ENCODE measurements at regions of chr20 and their contacts with region 1.

Region 1: DNA sequence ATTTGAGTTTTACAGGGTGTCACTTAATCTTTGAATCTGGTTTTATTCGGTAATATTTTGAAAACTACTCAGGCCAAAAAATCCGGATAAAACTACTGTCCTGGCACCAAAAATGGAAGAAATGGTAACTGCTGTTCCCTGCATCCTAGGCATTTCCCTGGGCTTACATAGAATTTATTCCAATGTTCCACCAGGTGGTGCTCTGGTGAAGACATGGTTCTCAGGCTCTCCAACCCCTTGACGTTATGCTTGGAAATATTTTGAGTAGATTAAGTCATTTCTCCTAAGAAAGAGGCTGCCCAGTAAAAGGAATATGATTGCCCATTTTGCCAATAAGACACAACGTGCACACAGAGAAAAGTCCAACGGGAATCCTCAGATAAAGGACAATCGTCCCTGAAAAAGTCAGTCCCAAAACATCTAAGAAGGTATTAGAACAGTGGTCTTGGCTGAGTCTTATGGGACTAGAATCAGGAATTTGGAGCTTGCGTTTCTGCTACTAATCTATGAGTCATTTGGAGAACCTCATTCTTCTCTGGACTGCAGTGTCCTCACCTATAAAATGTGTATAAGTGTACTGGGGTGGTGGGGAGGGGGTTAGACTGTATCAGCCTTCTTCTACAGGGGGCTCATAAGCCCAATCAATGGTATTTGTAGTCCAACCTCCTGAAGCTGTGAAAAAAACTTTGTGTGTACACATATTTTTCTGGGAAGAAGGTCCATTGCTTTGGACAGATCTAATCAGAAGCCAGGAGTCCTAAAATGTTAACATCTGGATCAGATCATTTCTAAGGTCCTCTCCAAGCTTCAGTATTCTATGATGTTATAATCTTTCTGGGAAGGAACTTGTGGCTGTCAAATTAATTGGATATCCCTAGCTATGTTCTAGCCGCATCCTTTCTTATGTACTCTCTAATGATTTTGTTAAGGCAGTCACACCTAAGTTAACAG is 131.0 kb upstream of the BMP2 start:
- DNase-seq: peak; percentile 34
- H3K4me3 Mint-ChIP-seq: no peak overlapping the region
- H3K27ac Mint-ChIP-seq: no peak overlapping the region
- H3K4me1 Mint-ChIP-seq: peaks cover 8% of the 10 kb centered on the region
- H3K27me3 Mint-ChIP-seq: no peaks in the 10 kb centered on the region
- CTCF ChIP-seq: peak; percentile 31

Region 2: GRCh38 chr20:6265204-6265904 is 371.1 kb before region 1 on chr20:
- CTCF ChIA-PET with region 1: no interaction called
- intact Hi-C with region 1: loop called (anchors 10 kb)
- DNase-seq: peak; percentile 6
- H3K4me3 Mint-ChIP-seq: no peak overlapping the region
- H3K27ac Mint-ChIP-seq: no peak overlapping the region
- H3K4me1 Mint-ChIP-seq: peaks cover 8% of the 10 kb centered on the region
- H3K27me3 Mint-ChIP-seq: peaks cover 48% of the 10 kb centered on the region
- CTCF ChIP-seq: no peak

Region 3: GRCh38 chr20:6583134-6583738 is 53.2 kb before region 1 on chr20:
- CTCF ChIA-PET with region 1: interaction called, 3 read pairs
- intact Hi-C with region 1: loop called (anchors 2 kb)
- DNase-seq: peak; percentile 52
- H3K4me3 Mint-ChIP-seq: no peak overlapping the region
- H3K27ac Mint-ChIP-seq: no peak overlapping the region
- H3K4me1 Mint-ChIP-seq: peaks cover 44% of the 10 kb centered on the region
- H3K27me3 Mint-ChIP-seq: no peaks in the 10 kb centered on the region
- CTCF ChIP-seq: peak; percentile 44

Region 4: DNA sequence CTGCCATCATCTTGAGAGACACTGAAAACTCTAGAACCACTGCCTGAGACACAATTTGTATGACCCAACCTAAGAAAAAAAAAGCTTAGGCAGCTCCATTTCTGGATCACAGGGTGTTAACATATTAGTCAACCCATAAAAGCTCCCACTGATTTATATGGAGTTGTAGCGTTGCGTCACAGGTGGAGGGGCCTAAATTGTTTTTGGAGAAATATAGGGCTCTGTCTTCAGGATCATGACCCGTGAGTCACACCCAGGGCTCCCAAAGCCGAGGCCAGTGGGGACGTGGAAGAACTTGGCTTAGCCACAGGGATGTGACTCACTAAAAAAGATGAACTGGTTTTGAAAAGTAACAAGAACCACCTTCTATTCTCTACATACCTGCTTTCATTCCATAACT is 14.5 kb after region 1 on chr20:
- CTCF ChIA-PET with region 1: no interaction called
- intact Hi-C with region 1: no loop called
- DNase-seq: peak; percentile 42
- H3K4me3 Mint-ChIP-seq: peak overlapping the region; percentile 49
- H3K27ac Mint-ChIP-seq: peak overlapping the region; percentile 77
- H3K4me1 Mint-ChIP-seq: peaks cover 11% of the 10 kb centered on the region
- H3K27me3 Mint-ChIP-seq: no peaks in the 10 kb centered on the region
- CTCF ChIP-seq: no peak

Region 5: DNA sequence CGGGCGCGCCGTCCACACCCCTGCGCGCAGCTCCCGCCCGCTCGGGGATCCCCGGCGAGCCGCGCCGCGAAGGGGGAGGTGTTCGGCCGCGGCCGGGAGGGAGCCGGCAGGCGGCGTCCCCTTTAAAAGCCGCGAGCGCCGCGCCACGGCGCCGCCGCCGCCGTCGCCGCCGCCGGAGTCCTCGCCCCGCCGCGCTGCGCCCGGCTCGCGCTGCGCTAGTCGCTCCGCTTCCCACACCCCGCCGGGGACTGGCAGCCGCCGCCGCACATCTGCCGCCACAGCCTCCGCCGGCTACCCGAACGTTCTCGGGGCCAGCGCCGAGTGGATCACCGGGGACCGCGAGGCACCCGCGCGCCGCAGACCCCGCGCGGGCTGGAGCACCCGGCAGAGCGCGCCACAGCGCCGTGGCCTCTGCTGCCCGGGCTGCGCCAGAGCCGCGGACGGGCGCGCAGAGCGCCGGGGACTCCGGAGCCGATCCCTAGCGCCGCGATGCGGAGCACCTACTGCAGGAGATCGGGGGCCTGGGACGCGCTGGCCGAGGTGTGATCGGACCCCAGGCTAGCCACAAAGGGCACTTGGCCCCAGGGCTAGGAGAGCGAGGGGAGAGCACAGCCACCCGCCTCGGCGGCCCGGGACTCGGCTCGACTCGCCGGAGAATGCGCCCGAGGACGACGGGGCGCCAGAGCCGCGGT is 131.2 kb after region 1 on chr20 and contains the start of gene BMP2:
- CTCF ChIA-PET with region 1: no interaction called
- intact Hi-C with region 1: loop called (anchors 2 kb)
- DNase-seq: peak; percentile 42
- H3K4me3 Mint-ChIP-seq: peak within 1 kb of the TSS; percentile 76
- H3K27ac Mint-ChIP-seq: no peak within 1 kb of the TSS
- H3K4me1 Mint-ChIP-seq: peaks cover 8% of the 10 kb centered on the region
- H3K27me3 Mint-ChIP-seq: no peaks in the 10 kb centered on the region
- CTCF ChIP-seq: no peak
- total RNA-seq, gene BMP2: 4.5 and 5.6 TPM in 2 replicates

Region 6: GRCh38 chr20:6819605-6820004 is 183.1 kb after region 1 on chr20:
- CTCF ChIA-PET with region 1: interaction called, 7 read pairs
- intact Hi-C with region 1: loop called (anchors 1 kb)
- DNase-seq: peak; percentile 32
- H3K4me3 Mint-ChIP-seq: no peak overlapping the region
- H3K27ac Mint-ChIP-seq: no peak overlapping the region
- H3K4me1 Mint-ChIP-seq: peaks cover 6% of the 10 kb centered on the region
- H3K27me3 Mint-ChIP-seq: no peaks in the 10 kb centered on the region
- CTCF ChIP-seq: no peak

Measured in Calu3 (cell line).